K562 (cell line): ENCODE measurements at regions of chr6 and their contacts with region 1.

Region 1: DNA sequence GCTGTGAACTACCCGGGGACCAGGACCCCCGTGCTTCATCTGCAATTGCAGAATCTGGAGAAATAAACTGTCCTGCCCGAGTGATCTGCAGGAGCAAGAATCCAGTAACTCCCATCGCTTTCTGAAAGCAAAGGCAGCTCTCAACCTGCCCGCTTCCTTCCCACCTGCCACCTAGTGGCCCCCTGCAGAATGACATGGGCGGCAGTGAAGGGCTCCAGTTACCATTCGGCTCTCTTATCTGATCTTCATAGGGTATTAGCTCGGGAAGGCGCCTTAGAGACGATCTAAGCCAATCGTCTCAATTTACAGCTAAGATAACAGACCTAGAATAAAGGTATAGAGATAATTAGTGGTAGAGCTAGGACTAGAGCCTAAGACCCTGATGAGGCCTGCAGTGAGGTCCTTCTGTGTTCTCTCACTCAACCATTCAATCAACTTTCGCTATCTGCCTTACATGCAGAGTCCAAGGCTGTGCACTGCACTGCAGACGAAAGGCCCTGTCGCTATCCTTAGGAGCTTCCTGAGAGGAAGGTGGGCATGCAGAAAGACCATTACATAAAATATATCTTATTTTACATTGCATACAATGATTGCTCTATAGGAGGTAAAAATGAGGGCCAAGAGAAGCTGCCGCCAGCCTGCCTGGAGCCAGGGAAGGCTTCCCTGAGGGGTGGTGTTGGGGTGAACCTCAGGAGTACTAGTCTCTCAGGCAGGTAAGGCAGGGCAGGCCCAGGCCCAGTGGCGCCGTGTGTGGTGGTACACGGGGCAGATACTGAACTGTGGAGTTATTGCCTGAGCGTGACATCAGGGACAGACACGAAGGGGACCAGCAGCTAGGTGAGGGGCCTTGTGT is 7.1 kb upstream of the PSMG4 start:
- DNase-seq: peak; percentile 92 to 96 (median 94)
- ATAC-seq: peak; percentile 93
- H3K4me3 ChIP-seq: no peak overlapping the region
- H3K27ac ChIP-seq: no peak overlapping the region
- H3K4me1 ChIP-seq: peaks cover 25 to 33% of the 10 kb centered on the region in 2 experiments
- H3K27me3 ChIP-seq: peaks cover 0 to 5% of the 10 kb centered on the region in 2 experiments; a peak in 1 of 5 replicates
- CTCF ChIP-seq: peak; percentile 97 to 99 (median 97)
- EP300 ChIP-seq: peak; percentile 46; the same call in 1 of the 2 replicates
- POLR2A ChIP-seq: no peak
- RAD21 ChIP-seq: peak; percentile 87 to 88

Region 2: GRCh38 chr6:3068329-3069214 is 183.1 kb before region 1 on chr6 and contains the start of gene RIPK1:
- CTCF ChIA-PET with region 1: no interaction called
- POLR2A ChIA-PET with region 1: interaction called, 5 read pairs
- in situ Hi-C with region 1: no loop called
- intact Hi-C with region 1: loop called (anchors 5 kb)
- DNase-seq: peak; percentile 96 to 98 (median 96)
- ATAC-seq: peak; percentile 85
- H3K4me3 ChIP-seq: peak within 1 kb of the TSS; percentile 84
- H3K27ac ChIP-seq: peak within 1 kb of the TSS; percentile 97
- H3K4me1 ChIP-seq: peaks cover 19 to 30% of the 10 kb centered on the region in 2 experiments
- H3K27me3 ChIP-seq: no peaks in the 10 kb centered on the region
- CTCF ChIP-seq: peak; percentile 57 to 68 (median 59); a peak in 5 of 6 replicates
- EP300 ChIP-seq: peak; percentile 51
- POLR2A ChIP-seq: peak; percentile 95
- RAD21 ChIP-seq: peak in 1 of 2 experiments; percentile 34; a peak in 3 of 4 replicates
- polyA plus RNA-seq, gene RIPK1: 3.8 to 4.5 TPM

Region 3: GRCh38 chr6:3124667-3125066 is 127.0 kb before region 1 on chr6:
- CTCF ChIA-PET with region 1: interaction called, 22 read pairs
- POLR2A ChIA-PET with region 1: interaction called, 6 read pairs
- in situ Hi-C with region 1: loop called (anchors 5 kb)
- intact Hi-C with region 1: loop called (anchors 2 kb)
- DNase-seq: no peak
- ATAC-seq: no peak
- H3K4me3 ChIP-seq: no peak overlapping the region
- H3K27ac ChIP-seq: no peak overlapping the region
- H3K4me1 ChIP-seq: peaks cover 8 to 9% of the 10 kb centered on the region in 2 experiments; a peak in 4 of 5 replicates
- H3K27me3 ChIP-seq: no peaks in the 10 kb centered on the region
- CTCF ChIP-seq: no peak
- EP300 ChIP-seq: no peak
- POLR2A ChIP-seq: no peak
- RAD21 ChIP-seq: no peak

Region 4: DNA sequence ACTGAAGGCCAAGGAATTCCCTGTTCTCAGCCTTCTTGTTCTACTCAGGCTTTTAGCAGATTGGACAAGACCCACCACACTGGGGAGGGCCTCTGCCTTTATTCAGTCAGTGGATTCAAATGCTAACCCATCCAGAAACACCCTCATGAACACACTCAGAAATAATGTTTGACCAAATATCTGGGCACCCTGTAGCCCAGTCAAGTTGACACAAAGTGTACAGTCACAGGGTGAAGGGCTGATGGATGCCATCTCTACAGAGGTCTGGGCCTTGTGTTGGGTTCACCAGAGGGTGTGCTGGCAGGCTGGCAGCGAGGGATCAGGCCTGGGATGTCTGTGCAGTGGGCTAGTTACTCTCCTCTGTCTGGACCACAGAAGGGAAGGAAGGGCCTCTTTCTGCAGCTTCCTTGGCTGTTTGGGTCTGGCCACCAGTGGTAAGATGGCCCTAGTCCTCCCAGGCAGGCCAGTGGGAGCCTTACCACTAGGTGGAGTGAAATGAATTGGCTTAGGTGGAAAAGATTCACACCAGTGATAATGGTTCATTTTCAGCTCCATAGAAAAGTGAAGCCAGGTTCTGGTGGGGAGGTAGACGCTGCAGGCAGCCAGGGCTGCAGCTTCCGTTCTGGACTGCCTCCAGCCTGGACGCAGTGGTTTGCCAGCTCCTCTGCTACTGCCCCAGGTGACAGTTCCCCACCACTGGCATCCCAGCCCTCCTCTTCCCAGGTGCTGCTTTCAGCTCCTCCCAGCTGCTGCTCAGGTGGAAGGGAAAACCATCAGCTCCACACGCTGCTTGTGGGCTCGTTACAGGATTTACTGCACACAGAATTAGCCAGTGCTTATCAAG is 103.6 kb before region 1 on chr6:
- CTCF ChIA-PET with region 1: interaction called, 3 read pairs
- POLR2A ChIA-PET with region 1: no interaction called
- in situ Hi-C with region 1: loop called (anchors 5 kb)
- intact Hi-C with region 1: no loop called
- DNase-seq: peak in 2 of 4 experiments; percentile 43 to 47
- ATAC-seq: peak; percentile 79
- H3K4me3 ChIP-seq: no peak overlapping the region
- H3K27ac ChIP-seq: no peak overlapping the region
- H3K4me1 ChIP-seq: peaks cover 0 to 12% of the 10 kb centered on the region in 2 experiments; a peak in 2 of 5 replicates
- H3K27me3 ChIP-seq: no peaks in the 10 kb centered on the region
- CTCF ChIP-seq: peak; percentile 44 to 56 (median 55)
- EP300 ChIP-seq: no peak
- POLR2A ChIP-seq: no peak
- RAD21 ChIP-seq: peak; percentile 21 to 63; a peak in 3 of 4 replicates

Region 5: DNA sequence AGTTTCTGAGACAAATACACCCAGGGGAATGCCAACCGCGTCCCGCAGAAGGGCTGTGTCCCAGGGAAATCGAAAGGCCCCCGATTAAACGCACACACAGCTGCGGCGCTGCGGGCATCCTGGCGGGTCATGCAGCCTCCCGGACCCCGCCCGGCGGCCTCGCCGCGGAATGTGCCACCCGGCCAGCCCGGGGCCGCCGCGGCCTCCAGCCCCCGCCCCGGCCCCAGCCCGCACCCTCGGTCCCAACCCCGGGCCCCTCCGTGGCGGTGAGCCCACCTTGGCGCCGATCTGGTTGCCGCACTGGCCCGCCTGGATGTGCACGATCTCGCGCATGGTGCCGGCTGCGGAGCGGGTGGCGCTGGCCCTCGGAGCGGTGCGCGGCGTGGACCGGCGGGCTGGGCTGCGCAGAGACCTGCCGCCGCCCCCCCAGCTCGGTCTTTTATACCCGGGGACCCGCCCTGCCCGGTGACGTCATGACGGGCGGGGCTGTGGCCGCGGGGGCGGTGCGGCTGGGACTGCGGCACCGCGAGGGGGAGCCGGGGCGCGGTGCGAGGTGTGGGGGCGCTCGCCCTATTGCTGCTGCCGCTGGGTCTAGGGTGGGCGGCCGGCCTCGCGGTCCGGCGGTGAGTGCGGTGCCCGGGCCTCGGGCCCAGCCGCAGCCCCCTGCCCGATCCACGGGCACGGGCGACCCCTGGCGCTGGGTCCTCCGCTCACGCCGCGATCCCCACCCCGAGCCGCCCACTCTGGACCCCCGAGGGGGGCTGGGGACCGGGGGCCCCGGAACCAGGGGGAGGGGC is 94.4 kb before region 1 on chr6 and contains the start of gene TUBB2A:
- CTCF ChIA-PET with region 1: no interaction called
- POLR2A ChIA-PET with region 1: interaction called, 18 read pairs
- in situ Hi-C with region 1: loop called (anchors 5 kb)
- intact Hi-C with region 1: loop called (anchors 2 kb)
- DNase-seq: peak; percentile 93 to 99 (median 96)
- ATAC-seq: peak; percentile 74
- H3K4me3 ChIP-seq: peak within 1 kb of the TSS; percentile 74
- H3K27ac ChIP-seq: peak within 1 kb of the TSS; percentile 90
- H3K4me1 ChIP-seq: peaks cover 36 to 40% of the 10 kb centered on the region in 2 experiments
- H3K27me3 ChIP-seq: no peaks in the 10 kb centered on the region
- CTCF ChIP-seq: peak; percentile 56 to 95 (median 87)
- EP300 ChIP-seq: no peak; the same call in 1 of the 2 replicates
- POLR2A ChIP-seq: peak; percentile 95
- RAD21 ChIP-seq: peak; percentile 71 to 74
- polyA plus RNA-seq, gene TUBB2A: 3.6 to 6.3 TPM

Region 6: GRCh38 chr6:3162565-3163247 is 89.0 kb before region 1 on chr6:
- CTCF ChIA-PET with region 1: no interaction called
- POLR2A ChIA-PET with region 1: interaction called, 18 read pairs
- in situ Hi-C with region 1: no loop called
- intact Hi-C with region 1: loop called (anchors 2 kb)
- DNase-seq: peak; percentile 92 to 99 (median 98)
- ATAC-seq: peak; percentile 79
- H3K4me3 ChIP-seq: peak overlapping the region; percentile 69
- H3K27ac ChIP-seq: peak overlapping the region; percentile 98
- H3K4me1 ChIP-seq: peaks cover 33 to 76% of the 10 kb centered on the region in 2 experiments
- H3K27me3 ChIP-seq: no peaks in the 10 kb centered on the region
- CTCF ChIP-seq: peak; percentile 21 to 38 (median 22); a peak in 4 of 6 replicates
- EP300 ChIP-seq: no peak; the same call in 1 of the 2 replicates
- POLR2A ChIP-seq: peak; percentile 93
- RAD21 ChIP-seq: peak; percentile 25 to 31

Region 7: GRCh38 chr6:3209114-3210023 is 42.3 kb before region 1 on chr6:
- CTCF ChIA-PET with region 1: no interaction called
- POLR2A ChIA-PET with region 1: interaction called, 3 read pairs
- in situ Hi-C with region 1: no loop called
- intact Hi-C with region 1: loop called (anchors 5 kb)
- DNase-seq: peak; percentile 93 to 97 (median 96)
- ATAC-seq: peak; percentile 98
- H3K4me3 ChIP-seq: no peak overlapping the region
- H3K27ac ChIP-seq: peak overlapping the region; percentile 75
- H3K4me1 ChIP-seq: peaks cover 33 to 44% of the 10 kb centered on the region in 2 experiments
- H3K27me3 ChIP-seq: no peaks in the 10 kb centered on the region
- CTCF ChIP-seq: peak; percentile 57 to 84 (median 82)
- EP300 ChIP-seq: peak; percentile 65
- POLR2A ChIP-seq: peak; percentile 47; the same call in 1 of the 2 replicates
- RAD21 ChIP-seq: peak; percentile 86 to 91